Ovary (tissue), 10 donors: ENCODE measurements at regions of chr1 and their contacts with region 1.

Region 1: GRCh38 chr1:85448358-85448757 is 16.6 kb downstream of the DDAH1 start:
- DNase-seq: no peak
- H3K4me3 ChIP-seq: no peak overlapping the region
- H3K27ac ChIP-seq: no peak overlapping the region
- H3K4me1 ChIP-seq: no peaks in the 10 kb centered on the region
- H3K27me3 ChIP-seq: no peaks in the 10 kb centered on the region
- CTCF ChIP-seq: no peak
- EP300 ChIP-seq: no peak
- POLR2A ChIP-seq: no peak

Region 2: DNA sequence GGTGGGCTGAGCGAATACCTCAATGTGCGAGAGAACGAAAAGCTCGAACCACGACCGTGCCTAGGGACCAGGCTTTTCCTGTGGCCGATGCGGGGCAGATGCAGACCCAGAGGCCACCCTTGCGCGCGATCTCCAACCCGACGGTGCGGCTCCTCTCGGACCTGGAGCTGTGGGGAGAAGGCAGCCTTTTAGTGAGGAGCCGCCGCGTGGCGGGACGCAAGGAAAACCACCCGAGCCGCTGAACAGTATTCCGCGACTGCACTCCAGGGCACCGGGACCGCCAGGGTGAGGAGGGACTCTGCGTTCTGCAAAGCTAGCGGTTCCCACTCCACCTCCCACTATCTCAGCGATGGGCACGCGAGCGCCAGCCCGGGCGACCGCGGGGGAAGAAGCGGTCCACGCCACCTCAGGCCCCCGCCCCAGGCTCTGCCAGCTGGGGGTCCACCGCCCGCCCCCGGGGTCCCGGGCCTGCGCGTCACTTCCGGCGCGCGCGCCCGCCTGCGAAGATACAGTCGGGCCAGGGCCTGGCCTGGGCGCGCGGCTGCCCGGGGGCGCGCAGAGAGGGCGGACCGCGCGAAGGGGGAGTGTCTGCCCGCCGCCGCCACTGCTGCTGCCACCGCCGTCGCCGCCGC is 1370.8 kb before region 1 on chr1:
- intact Hi-C with region 1: no loop called
- DNase-seq: peak; percentile 65 to 86 (median 79)
- H3K4me3 ChIP-seq: peak overlapping the region; percentile 94
- H3K27ac ChIP-seq: peak overlapping the region; percentile 87 to 93
- H3K4me1 ChIP-seq: no peaks in the 10 kb centered on the region
- H3K27me3 ChIP-seq: no peaks in the 10 kb centered on the region
- CTCF ChIP-seq: peak in 2 of 3 donors; percentile 10 to 19
- EP300 ChIP-seq: no peak
- POLR2A ChIP-seq: no peak

Region 3: GRCh38 chr1:84135341-84135740 is 1313.0 kb before region 1 on chr1:
- intact Hi-C with region 1: loop called in 1 of 4 experiments (anchors 5 kb)
- DNase-seq: no peak
- H3K4me3 ChIP-seq: no peak overlapping the region
- H3K27ac ChIP-seq: no peak overlapping the region
- H3K4me1 ChIP-seq: no peaks in the 10 kb centered on the region
- H3K27me3 ChIP-seq: no peaks in the 10 kb centered on the region
- CTCF ChIP-seq: no peak
- EP300 ChIP-seq: no peak
- POLR2A ChIP-seq: no peak

Region 4: GRCh38 chr1:85313888-85314696 is 134.3 kb before region 1 on chr1:
- intact Hi-C with region 1: no loop called
- DNase-seq: no peak
- H3K4me3 ChIP-seq: no peak overlapping the region
- H3K27ac ChIP-seq: no peak overlapping the region
- H3K4me1 ChIP-seq: peaks cover 8% of the 10 kb centered on the region
- H3K27me3 ChIP-seq: no peaks in the 10 kb centered on the region
- CTCF ChIP-seq: no peak
- EP300 ChIP-seq: no peak
- POLR2A ChIP-seq: no peak